CD14-positive monocyte (primary cell): ENCODE measurements at regions of chrX and their contacts with region 1.

Region 1: GRCh38 chrX:71393919-71394318 is 27.8 kb downstream of the TAF1 start:
- DNase-seq: no peak
- H3K4me3 ChIP-seq: no peak overlapping the region
- H3K4me3 Mint-ChIP-seq: no peak overlapping the region
- H3K27ac ChIP-seq: no peak overlapping the region
- H3K27ac Mint-ChIP-seq: peak overlapping the region in 2 of 7 donors; percentile 31 to 34
- H3K4me1 ChIP-seq: no peaks in the 10 kb centered on the region
- H3K4me1 Mint-ChIP-seq: no peaks in the 10 kb centered on the region
- H3K27me3 ChIP-seq: no peaks in the 10 kb centered on the region
- H3K27me3 Mint-ChIP-seq: peaks cover 0 to 2% (median 0%) of the 10 kb centered on the region in 3 donors
- CTCF ChIP-seq: no peak

Region 2: GRCh38 chrX:71579136-71579989 is 185.4 kb after region 1 on chrX:
- intact Hi-C with region 1: loop called in 1 of 2 experiments (anchors 10 kb)
- DNase-seq: no peak
- H3K4me3 ChIP-seq: no peak overlapping the region
- H3K4me3 Mint-ChIP-seq: no peak overlapping the region
- H3K27ac ChIP-seq: no peak overlapping the region
- H3K27ac Mint-ChIP-seq: peak overlapping the region in 1 of 7 donors; percentile 26
- H3K4me1 ChIP-seq: no peaks in the 10 kb centered on the region
- H3K4me1 Mint-ChIP-seq: no peaks in the 10 kb centered on the region
- H3K27me3 ChIP-seq: no peaks in the 10 kb centered on the region
- H3K27me3 Mint-ChIP-seq: peaks cover 0 to 1% (median 0%) of the 10 kb centered on the region in 3 donors
- CTCF ChIP-seq: no peak